ENCODE measurements at regions of chr2 and their contacts with region 1.

Region 1: GRCh38 chr2:229921892-229922445 is at the start of gene TRIP12:
- DNase-seq: peak; percentile 91
- H3K4me3 Mint-ChIP-seq: peak within 1 kb of the TSS; percentile 95
- H3K27ac Mint-ChIP-seq: peak within 1 kb of the TSS; percentile 99
- H3K4me1 Mint-ChIP-seq: peaks cover 29% of the 10 kb centered on the region
- H3K27me3 Mint-ChIP-seq: no peaks in the 10 kb centered on the region
- total RNA-seq, gene TRIP12: 226 to 253 TPM

Region 2: GRCh38 chr2:229800997-229801754 is 120.8 kb before region 1 on chr2:
- CTCF ChIA-PET with region 1: interaction called, 6 read pairs
- POLR2A ChIA-PET with region 1: interaction called, 4 read pairs
- intact Hi-C with region 1: loop called (anchors 1 kb)
- DNase-seq: peak; percentile 79
- H3K4me3 Mint-ChIP-seq: no peak overlapping the region
- H3K27ac Mint-ChIP-seq: no peak overlapping the region
- H3K4me1 Mint-ChIP-seq: no peaks in the 10 kb centered on the region
- H3K27me3 Mint-ChIP-seq: no peaks in the 10 kb centered on the region

Region 3: DNA sequence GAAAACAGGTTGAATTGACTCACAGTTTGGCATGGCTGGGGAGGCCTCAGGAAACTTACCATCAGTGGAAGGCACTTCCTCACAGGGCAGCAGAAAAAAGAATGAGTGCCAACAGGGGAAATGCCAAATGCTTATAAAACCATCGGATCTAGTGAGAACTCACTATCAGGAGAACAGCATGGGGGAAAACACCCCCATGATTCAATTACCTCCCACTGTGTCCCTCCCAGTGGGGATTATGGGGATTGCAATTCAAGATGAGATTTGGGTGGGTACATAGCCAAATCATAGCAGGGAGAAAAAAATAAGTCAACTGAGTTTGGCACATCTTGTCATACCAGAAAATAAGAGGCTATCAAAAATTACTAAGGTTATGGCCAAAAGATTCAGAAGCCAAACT is 96.5 kb before region 1 on chr2:
- CTCF ChIA-PET with region 1: no interaction called
- POLR2A ChIA-PET with region 1: interaction called, 3 read pairs
- intact Hi-C with region 1: loop called (anchors 1 kb)
- DNase-seq: no peak
- H3K4me3 Mint-ChIP-seq: no peak overlapping the region
- H3K27ac Mint-ChIP-seq: no peak overlapping the region
- H3K4me1 Mint-ChIP-seq: peaks cover 22% of the 10 kb centered on the region
- H3K27me3 Mint-ChIP-seq: no peaks in the 10 kb centered on the region

Region 4: DNA sequence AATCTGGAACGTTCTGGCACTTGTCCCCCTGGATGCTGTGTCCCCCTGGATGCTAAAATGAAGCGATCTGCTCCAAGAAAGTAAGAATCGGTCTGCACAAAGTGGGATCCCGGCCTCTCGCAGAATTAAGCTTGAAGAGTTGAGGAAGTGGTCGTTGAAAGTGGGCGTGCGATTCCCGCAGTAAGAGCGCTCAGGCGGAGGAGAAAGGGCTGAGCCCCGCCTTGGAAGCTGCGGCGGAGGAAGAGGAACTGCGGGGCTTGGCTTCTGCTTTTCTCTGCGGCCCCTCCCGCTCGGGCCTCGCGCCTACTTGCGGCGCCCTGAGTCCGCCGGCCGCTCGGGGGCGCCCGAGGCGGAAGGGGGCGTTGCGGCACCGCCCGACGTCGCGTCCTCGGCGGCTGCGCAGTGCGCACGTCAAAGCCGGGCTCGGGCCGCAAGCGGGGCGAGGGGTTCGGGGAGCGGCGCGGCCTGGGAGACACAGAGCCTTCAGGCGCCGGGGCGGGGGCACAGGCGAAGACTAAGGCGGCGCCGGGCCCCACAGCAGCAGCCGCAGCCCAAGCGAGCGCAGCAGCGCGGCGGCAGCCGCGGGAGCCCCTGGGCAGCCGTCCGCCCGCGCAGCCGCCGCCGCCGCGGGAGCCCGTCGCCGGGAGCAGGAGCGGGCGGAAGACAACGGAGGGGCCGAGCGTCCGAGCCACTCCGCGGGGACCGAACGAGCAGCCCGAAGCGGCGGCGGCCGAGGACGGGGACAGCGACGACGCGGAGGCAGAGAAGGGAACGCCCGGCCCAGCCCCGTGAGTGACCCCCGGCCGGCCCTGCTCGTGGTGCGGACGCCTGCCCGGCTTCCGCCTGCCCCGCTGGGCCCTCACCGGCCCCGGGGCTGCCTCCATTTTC is 790.7 kb after region 1 on chr2 and contains the start of gene CAB39:
- CTCF ChIA-PET with region 1: no interaction called
- POLR2A ChIA-PET with region 1: no interaction called
- intact Hi-C with region 1: loop called (anchors 5 kb)
- DNase-seq: peak; percentile 91
- H3K4me3 Mint-ChIP-seq: peak within 1 kb of the TSS; percentile 93
- H3K27ac Mint-ChIP-seq: peak within 1 kb of the TSS; percentile 91
- H3K4me1 Mint-ChIP-seq: peaks cover 41% of the 10 kb centered on the region
- H3K27me3 Mint-ChIP-seq: no peaks in the 10 kb centered on the region
- total RNA-seq, gene CAB39: 128 to 129 TPM